ENCODE measurements at regions of chr22 and their contacts with region 1.

Region 1: GRCh38 chr22:36884349-36885117 is 23.7 kb downstream of the NCF4 start:
- DNase-seq: no peak
- H3K4me3 Mint-ChIP-seq: no peak overlapping the region
- H3K27ac Mint-ChIP-seq: peak overlapping the region; percentile 60
- H3K4me1 Mint-ChIP-seq: peaks cover 26% of the 10 kb centered on the region
- H3K27me3 Mint-ChIP-seq: peaks cover 2% of the 10 kb centered on the region

Region 2: GRCh38 chr22:36901411-36902142 is 17.0 kb after region 1 on chr22:
- intact Hi-C with region 1: loop called (anchors 2 kb)
- DNase-seq: peak; percentile 57
- H3K4me3 Mint-ChIP-seq: peak overlapping the region; percentile 57
- H3K27ac Mint-ChIP-seq: peak overlapping the region; percentile 95
- H3K4me1 Mint-ChIP-seq: peaks cover 31% of the 10 kb centered on the region
- H3K27me3 Mint-ChIP-seq: peaks cover 7% of the 10 kb centered on the region